Panc1 (cell line): ENCODE measurements at regions of chr1 and their contacts with region 1.

Region 1: DNA sequence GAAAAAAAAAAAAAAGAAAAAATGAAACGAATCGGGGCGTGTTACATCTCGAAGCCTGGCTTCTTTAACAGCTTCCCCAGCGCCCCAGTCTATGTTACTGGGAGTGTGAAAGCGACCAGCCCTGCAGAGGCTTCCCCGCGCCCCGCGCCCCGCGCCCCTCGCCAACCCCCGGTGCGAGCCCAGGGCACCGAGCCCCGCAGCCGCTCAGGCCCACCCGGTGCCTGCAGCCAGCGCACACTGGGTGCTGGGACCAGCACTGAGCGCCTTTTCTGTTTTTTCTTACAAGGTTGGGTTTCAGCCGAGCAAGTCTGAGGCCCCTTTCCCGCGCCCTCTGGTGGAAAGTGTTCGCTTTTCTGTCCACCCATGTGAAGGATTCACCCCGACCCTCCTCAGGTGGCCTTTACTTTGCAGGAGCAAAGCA is 42.1 kb upstream of the ZNF496 start:
- DNase-seq: no peak
- ATAC-seq: peak; percentile 85
- H3K4me3 ChIP-seq: peak overlapping the region; percentile 45 to 57
- H3K27ac ChIP-seq: no peak overlapping the region
- H3K4me1 ChIP-seq: no peaks in the 10 kb centered on the region
- H3K27me3 ChIP-seq: no peaks in the 10 kb centered on the region
- CTCF ChIP-seq: peak; percentile 88

Region 2: GRCh38 chr1:247270003-247270402 is 103.7 kb before region 1 on chr1:
- CTCF ChIA-PET with region 1: interaction called, 13 read pairs
- POLR2A ChIA-PET with region 1: no interaction called
- in situ Hi-C with region 1: no loop called
- intact Hi-C with region 1: no loop called
- DNase-seq: no peak
- ATAC-seq: no peak
- H3K4me3 ChIP-seq: no peak overlapping the region
- H3K27ac ChIP-seq: no peak overlapping the region
- H3K4me1 ChIP-seq: no peaks in the 10 kb centered on the region
- H3K27me3 ChIP-seq: no peaks in the 10 kb centered on the region
- CTCF ChIP-seq: no peak

Region 3: DNA sequence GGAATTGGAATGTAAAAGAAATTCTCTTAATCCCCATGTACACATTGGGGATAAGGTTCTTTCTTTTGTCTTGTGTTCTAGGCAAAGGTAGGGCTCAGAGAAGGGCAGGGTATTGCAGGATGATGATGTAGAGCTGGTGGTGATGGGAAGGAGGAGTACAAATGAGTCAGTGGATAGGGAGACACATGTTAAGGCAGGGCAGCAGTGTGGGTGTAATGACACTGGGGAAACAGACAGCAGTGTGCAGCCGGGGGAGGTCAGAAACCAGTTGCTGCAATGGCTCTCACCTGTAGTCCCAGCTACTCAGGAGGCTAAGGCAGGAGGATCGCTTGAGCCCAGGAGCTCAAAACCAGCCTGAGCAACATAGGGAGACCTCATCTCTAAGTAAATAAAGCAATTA is 47.3 kb after region 1 on chr1:
- CTCF ChIA-PET with region 1: no interaction called
- POLR2A ChIA-PET with region 1: no interaction called
- in situ Hi-C with region 1: no loop called
- intact Hi-C with region 1: no loop called
- DNase-seq: no peak
- ATAC-seq: no peak
- H3K4me3 ChIP-seq: no peak overlapping the region
- H3K27ac ChIP-seq: no peak overlapping the region
- H3K4me1 ChIP-seq: peaks cover 6% of the 10 kb centered on the region; the same call in 1 of the 2 replicates
- H3K27me3 ChIP-seq: 0 out of 2 replicates have a peak, but pooled peaks cover 3% of the 10 kb centered on the region
- CTCF ChIP-seq: no peak

Region 4: DNA sequence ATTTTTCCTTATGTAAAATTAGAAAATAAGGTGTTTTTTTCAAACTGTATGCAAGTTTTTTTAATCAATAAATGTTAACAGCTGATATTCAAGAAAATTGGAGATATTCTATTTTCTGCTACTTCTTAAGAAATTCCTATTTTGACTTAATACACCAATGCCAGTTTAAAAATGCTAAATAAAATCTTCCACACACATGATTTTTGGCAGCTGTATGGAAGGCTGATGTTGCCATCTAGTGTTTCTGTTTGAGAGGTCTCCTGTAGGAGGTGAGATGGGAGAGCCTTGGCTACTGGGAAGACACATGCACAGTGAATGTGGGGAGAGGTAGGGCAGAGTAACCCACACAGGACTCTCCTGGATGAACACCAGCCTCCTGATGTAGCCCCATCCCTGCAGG is 113.3 kb after region 1 on chr1:
- CTCF ChIA-PET with region 1: interaction called, 21 read pairs
- POLR2A ChIA-PET with region 1: no interaction called
- in situ Hi-C with region 1: no loop called
- intact Hi-C with region 1: loop called (anchors 5 kb)
- DNase-seq: peak; percentile 25
- ATAC-seq: peak; percentile 97
- H3K4me3 ChIP-seq: no peak overlapping the region
- H3K27ac ChIP-seq: no peak overlapping the region
- H3K4me1 ChIP-seq: no peaks in the 10 kb centered on the region
- H3K27me3 ChIP-seq: peaks cover 7% of the 10 kb centered on the region
- CTCF ChIP-seq: peak; percentile 71

Region 5: GRCh38 chr1:247500865-247501264 is 127.1 kb after region 1 on chr1:
- CTCF ChIA-PET with region 1: no interaction called
- POLR2A ChIA-PET with region 1: no interaction called
- in situ Hi-C with region 1: no loop called
- intact Hi-C with region 1: no loop called
- DNase-seq: no peak
- ATAC-seq: no peak
- H3K4me3 ChIP-seq: no peak overlapping the region
- H3K27ac ChIP-seq: no peak overlapping the region
- H3K4me1 ChIP-seq: no peaks in the 10 kb centered on the region
- H3K27me3 ChIP-seq: no peaks in the 10 kb centered on the region
- CTCF ChIP-seq: no peak

Region 6: DNA sequence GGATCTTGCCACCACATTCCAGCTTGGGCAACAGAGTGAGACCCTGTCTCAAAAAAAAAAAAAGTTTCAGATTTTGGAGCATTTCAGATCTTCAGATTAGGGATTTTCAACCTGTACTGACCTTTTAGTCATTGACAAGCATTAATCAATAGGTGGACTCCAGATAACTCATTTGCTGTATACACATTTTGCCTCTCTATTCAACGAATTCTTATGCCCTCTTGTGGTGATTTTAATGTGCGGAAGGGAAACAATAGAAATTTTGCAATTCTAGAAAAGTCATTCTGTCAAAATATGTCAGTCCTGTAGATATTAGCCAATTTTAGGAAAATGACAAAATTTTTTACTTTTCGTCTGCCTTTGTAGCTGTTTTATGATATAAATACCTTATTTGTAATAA is 202.8 kb after region 1 on chr1:
- CTCF ChIA-PET with region 1: no interaction called
- POLR2A ChIA-PET with region 1: no interaction called
- in situ Hi-C with region 1: no loop called
- intact Hi-C with region 1: loop called (anchors 5 kb)
- DNase-seq: peak; percentile 5
- ATAC-seq: no peak
- H3K4me3 ChIP-seq: no peak overlapping the region
- H3K27ac ChIP-seq: no peak overlapping the region
- H3K4me1 ChIP-seq: no peaks in the 10 kb centered on the region
- H3K27me3 ChIP-seq: no peaks in the 10 kb centered on the region
- CTCF ChIP-seq: peak; percentile 62